ENCODE measurements at regions of chr11 and their contacts with region 1.

Region 1: GRCh38 chr11:97019754-97020153 is 629.9 kb downstream of the JRKL start:
- DNase-seq: no peak
- H3K4me3 ChIP-seq: no peak overlapping the region
- H3K27ac ChIP-seq: no peak overlapping the region
- H3K4me1 ChIP-seq: no peaks in the 10 kb centered on the region
- H3K27me3 ChIP-seq: no peaks in the 10 kb centered on the region
- CTCF ChIP-seq: no peak
- EP300 ChIP-seq: no peak
- POLR2A ChIP-seq: no peak

Region 2: DNA sequence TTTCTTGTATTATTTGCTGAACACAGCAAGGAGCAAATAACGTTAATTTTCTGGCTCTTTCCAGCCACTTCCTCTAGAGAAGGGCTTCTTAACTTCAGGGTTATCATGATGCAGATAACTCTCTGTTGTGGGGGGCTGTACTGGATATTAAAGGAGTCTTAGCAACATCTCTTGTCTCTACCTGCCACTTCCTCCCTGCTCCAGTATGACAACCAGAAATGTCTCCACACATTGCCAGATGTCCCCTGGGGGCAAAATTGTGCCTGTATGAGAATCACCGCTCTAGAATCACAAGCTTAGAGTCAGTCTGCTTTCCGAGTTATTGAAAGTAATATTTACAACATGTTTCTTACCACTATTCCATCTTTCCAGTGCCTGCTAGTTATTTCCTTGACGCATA is 623.1 kb before region 1 on chr11:
- in situ Hi-C with region 1: no loop called
- intact Hi-C with region 1: no loop called
- DNase-seq: no peak
- H3K4me3 ChIP-seq: no peak overlapping the region
- H3K27ac ChIP-seq: no peak overlapping the region
- H3K4me1 ChIP-seq: peaks cover 0 to 4% (median 0%) of the 10 kb centered on the region in 4 donors
- H3K27me3 ChIP-seq: no peaks in the 10 kb centered on the region
- CTCF ChIP-seq: no peak
- EP300 ChIP-seq: no peak
- POLR2A ChIP-seq: no peak

Region 3: DNA sequence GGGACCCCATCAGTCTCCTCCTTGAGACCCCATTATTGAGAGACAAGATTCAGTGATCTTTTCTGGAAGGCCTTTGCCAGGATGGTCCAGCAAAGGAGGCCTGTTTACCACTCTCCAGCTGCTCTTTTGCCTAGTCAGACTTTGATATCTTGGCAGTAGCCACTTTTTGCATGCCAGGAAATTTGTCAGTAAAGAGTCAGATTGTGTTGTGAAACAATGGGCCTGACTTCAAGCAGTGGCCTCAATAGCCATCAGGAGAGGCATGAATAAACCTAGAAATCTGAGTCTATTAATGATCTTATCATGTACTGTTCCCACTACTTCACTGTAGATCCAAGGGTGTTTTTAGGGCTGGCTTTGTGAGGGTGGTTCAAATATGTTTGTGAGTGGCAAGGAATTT is 150.5 kb before region 1 on chr11:
- in situ Hi-C with region 1: no loop called
- intact Hi-C with region 1: no loop called
- DNase-seq: no peak
- H3K4me3 ChIP-seq: no peak overlapping the region
- H3K27ac ChIP-seq: no peak overlapping the region
- H3K4me1 ChIP-seq: no peaks in the 10 kb centered on the region
- H3K27me3 ChIP-seq: no peaks in the 10 kb centered on the region
- CTCF ChIP-seq: no peak
- EP300 ChIP-seq: no peak
- POLR2A ChIP-seq: no peak

Region 4: DNA sequence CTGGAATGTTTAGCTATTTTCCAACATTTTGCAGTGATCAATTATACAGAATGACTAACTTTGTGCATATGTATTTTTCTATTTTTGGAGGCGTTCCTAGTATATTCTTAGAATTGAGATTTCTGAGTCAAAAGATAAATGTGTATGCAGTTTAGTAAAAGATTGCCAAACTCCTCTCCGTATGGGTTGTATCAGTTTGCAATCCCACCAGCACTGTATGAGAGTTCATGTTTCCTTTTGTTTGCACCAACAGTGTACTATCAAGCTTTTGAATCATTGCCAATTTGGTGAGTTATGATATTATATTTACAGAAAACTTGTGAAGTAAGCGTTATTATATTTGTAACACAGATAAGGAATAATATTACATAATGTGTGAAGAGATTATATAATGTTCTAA is 28.7 kb after region 1 on chr11:
- in situ Hi-C with region 1: no loop called
- intact Hi-C with region 1: loop called (anchors 2 kb)
- DNase-seq: no peak
- H3K4me3 ChIP-seq: no peak overlapping the region
- H3K27ac ChIP-seq: no peak overlapping the region
- H3K4me1 ChIP-seq: no peaks in the 10 kb centered on the region
- H3K27me3 ChIP-seq: no peaks in the 10 kb centered on the region
- CTCF ChIP-seq: no peak
- EP300 ChIP-seq: no peak
- POLR2A ChIP-seq: no peak

Measured in transverse colon (tissue), 4 donors.